Activated B cell treated with CpG ODN at 0.5 μM for 24 hours (primary cell): ENCODE measurements at regions of chr5 and their contacts with region 1.

Region 1: DNA sequence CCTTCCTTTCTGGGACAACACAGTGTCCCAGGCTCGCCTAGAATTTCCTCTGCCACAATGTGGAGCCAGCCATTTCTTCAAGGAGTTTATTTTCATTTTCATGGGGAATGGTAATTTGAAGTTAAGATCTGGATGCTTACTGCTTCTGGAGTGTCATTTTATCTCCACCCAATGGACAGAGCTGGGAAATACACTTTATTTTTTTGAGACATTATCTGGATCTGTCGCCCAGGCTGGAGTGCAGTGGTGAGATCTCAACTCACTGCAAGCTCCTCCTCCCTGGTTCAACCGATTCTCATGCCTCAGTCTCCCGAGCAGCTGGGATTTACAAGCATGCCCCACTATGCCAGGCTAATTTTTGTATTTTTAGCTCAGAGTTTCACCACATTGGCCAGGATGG is 12.7 kb upstream of the THG1L start:
- DNase-seq: no peak
- ATAC-seq: peak; percentile 95
- H3K4me3 Mint-ChIP-seq: no peak overlapping the region
- H3K27ac Mint-ChIP-seq: peak overlapping the region; percentile 41
- H3K4me1 Mint-ChIP-seq: peaks cover 18% of the 10 kb centered on the region
- H3K27me3 Mint-ChIP-seq: no peaks in the 10 kb centered on the region
- CTCF ChIP-seq: no peak

Region 2: DNA sequence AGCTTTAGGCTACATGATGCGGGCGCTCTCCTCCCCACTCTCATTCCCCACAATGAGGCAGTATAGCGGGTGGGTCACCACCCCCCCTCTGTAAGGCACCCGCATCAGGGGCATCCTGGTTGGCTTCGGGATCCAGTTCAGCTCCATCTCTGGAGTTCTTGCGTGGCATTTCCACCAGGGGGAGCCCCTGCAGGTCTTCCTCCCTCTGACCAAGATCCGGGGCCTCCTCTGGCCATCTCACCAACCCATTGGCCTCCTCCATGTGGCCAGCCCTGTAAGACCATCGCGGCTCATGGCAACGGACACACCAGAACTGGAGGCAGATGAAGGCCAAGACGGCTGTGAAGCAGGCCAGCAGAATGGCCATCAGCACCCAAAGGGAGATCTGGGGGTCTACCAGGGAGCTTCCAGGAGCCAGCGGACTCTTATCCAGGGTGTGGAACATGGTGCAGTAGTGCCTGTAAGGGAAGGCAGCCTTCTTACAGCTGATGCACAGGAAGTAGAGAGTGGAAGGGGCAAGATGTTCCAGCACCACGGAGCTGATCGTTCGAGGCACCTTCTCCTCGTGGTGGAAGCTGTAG is 375.6 kb before region 1 on chr5:
- CTCF ChIA-PET with region 1: interaction called, 17 read pairs
- POLR2A ChIA-PET with region 1: interaction called, 3 read pairs
- intact Hi-C with region 1: loop called (anchors 5 kb)
- DNase-seq: peak; percentile 27
- ATAC-seq: peak; percentile 50
- H3K4me3 Mint-ChIP-seq: no peak overlapping the region
- H3K27ac Mint-ChIP-seq: no peak overlapping the region
- H3K4me1 Mint-ChIP-seq: no peaks in the 10 kb centered on the region
- H3K27me3 Mint-ChIP-seq: no peaks in the 10 kb centered on the region
- CTCF ChIP-seq: no peak

Region 3: GRCh38 chr5:157471709-157472108 is 246.8 kb before region 1 on chr5:
- CTCF ChIA-PET with region 1: interaction called, 19 read pairs
- POLR2A ChIA-PET with region 1: no interaction called
- intact Hi-C with region 1: no loop called
- DNase-seq: no peak
- ATAC-seq: peak; percentile 61
- H3K4me3 Mint-ChIP-seq: no peak overlapping the region
- H3K27ac Mint-ChIP-seq: peak overlapping the region; percentile 2
- H3K4me1 Mint-ChIP-seq: peaks cover 46% of the 10 kb centered on the region
- H3K27me3 Mint-ChIP-seq: no peaks in the 10 kb centered on the region
- CTCF ChIP-seq: no peak

Region 4: DNA sequence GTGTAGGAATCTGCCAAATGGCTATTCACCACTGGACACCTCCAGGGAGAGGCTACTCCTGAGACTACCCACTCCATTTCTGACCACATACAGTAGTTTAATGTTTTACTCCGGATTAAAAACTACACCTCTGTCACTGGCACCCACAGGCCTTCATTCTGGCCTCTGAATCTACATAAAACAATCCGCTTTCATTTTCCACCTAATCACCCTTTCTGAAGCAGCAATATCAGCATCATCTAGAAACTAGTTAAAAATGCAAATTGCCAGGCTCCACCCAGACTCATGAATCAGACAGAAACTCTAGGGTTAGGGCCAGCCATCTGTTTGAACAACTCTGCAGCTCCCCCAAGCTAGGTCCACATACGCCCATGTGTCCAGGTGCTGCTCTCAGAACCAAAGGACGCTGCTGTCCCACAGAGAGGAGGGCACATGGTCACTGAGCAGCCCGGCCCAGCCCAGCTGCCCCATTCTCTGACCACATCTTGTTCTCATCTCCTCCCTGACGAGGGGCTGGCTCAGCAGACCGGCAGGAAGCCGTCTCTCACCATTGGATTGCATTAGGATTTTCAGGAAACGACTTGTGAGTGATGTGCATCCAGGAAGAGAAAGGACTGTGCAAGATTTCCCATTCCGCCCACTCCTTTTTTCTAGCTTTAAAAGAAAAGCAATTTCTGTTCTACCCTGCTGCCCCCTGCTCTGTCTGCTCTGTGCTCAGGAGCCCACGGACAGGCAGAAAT is 177.6 kb before region 1 on chr5:
- CTCF ChIA-PET with region 1: no interaction called
- POLR2A ChIA-PET with region 1: no interaction called
- intact Hi-C with region 1: loop called (anchors 5 kb)
- DNase-seq: peak; percentile 37
- ATAC-seq: peak; percentile 91
- H3K4me3 Mint-ChIP-seq: peak overlapping the region; percentile 60
- H3K27ac Mint-ChIP-seq: peak overlapping the region; percentile 92
- H3K4me1 Mint-ChIP-seq: peaks cover 86% of the 10 kb centered on the region
- H3K27me3 Mint-ChIP-seq: no peaks in the 10 kb centered on the region
- CTCF ChIP-seq: no peak

Region 5: DNA sequence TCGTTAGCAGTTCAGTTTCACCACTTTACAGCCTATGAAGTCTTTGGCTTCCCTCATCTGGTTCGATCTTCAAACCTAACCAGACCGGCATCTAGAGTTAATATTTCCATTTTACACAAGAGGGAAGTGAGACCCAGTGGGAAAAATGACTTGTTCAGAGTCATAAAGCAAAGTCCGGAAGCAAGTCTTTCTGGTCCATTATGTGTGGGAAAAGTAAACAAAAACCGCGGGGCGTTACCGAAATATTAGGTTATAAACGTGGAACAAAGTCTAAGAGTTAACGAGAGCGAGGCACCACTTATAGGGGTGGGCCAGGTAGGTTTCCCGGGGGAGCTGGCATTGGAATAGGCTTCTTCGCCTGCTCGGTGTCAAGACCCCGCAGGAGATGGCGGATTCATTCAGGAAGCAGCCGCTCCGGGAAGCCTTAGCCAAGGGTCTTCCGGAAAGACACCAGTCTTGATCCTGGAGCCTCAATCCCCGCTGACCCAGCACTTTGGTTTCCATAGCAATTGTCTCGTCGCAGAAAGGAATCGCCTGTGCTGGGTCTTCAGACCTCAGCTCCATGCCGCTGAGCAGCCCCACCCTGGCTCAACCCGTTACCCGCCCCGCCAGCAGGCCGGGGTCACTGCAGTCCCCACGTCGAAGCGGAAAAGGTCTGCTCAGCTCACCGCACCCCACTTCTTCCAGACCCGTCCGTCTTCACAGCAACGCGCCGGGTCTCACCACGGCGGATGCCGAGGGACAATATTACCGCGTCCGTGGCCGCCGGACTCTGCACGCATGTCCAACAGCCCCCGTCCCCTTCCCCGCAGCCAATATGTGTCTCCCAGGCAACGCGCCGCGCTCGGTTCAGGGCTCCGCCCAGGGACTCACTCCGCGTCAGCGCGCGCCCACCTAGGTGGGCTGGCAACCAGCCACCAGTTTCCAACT is 47.6 kb before region 1 on chr5 and contains the start of gene C5orf52:
- CTCF ChIA-PET with region 1: interaction called, 25 read pairs
- POLR2A ChIA-PET with region 1: interaction called, 10 read pairs
- intact Hi-C with region 1: loop called (anchors 1 kb)
- DNase-seq: no peak
- ATAC-seq: peak; percentile 55
- H3K4me3 Mint-ChIP-seq: peak within 1 kb of the TSS; percentile 95
- H3K27ac Mint-ChIP-seq: peak within 1 kb of the TSS; percentile 65
- H3K4me1 Mint-ChIP-seq: peaks cover 28% of the 10 kb centered on the region
- H3K27me3 Mint-ChIP-seq: no peaks in the 10 kb centered on the region
- CTCF ChIP-seq: no peak
- total RNA-seq, gene C5orf52: not detected in 2 replicates

Region 6: GRCh38 chr5:157842787-157843186 is 124.3 kb after region 1 on chr5:
- CTCF ChIA-PET with region 1: no interaction called
- POLR2A ChIA-PET with region 1: no interaction called
- intact Hi-C with region 1: no loop called
- DNase-seq: no peak
- ATAC-seq: no peak
- H3K4me3 Mint-ChIP-seq: no peak overlapping the region
- H3K27ac Mint-ChIP-seq: no peak overlapping the region
- H3K4me1 Mint-ChIP-seq: peaks cover 16% of the 10 kb centered on the region
- H3K27me3 Mint-ChIP-seq: no peaks in the 10 kb centered on the region
- CTCF ChIP-seq: no peak